Head of caudate nucleus (tissue), 42 donors: ENCODE measurements at regions of chr1 and their contacts with region 1.

Region 1: GRCh38 chr1:110780600-110781484 is 92.1 kb upstream of the CD53 start:
- DNase-seq: peak; percentile 34 to 88 (median 71)

Region 2: GRCh38 chr1:110630839-110631663 is 149.8 kb before region 1 on chr1:
- intact Hi-C with region 1: loop called (anchors 5 kb)
- DNase-seq: peak; percentile 58 to 90 (median 78)

Region 3: GRCh38 chr1:110872745-110873720 is 92.2 kb after region 1 on chr1 and contains the start of gene CD53:
- intact Hi-C with region 1: no loop called
- DNase-seq: peak in 12 of 42 donors; percentile 4 to 44 (median 18)